ENCODE measurements at regions of chr15 and their contacts with region 1.

Region 1: DNA sequence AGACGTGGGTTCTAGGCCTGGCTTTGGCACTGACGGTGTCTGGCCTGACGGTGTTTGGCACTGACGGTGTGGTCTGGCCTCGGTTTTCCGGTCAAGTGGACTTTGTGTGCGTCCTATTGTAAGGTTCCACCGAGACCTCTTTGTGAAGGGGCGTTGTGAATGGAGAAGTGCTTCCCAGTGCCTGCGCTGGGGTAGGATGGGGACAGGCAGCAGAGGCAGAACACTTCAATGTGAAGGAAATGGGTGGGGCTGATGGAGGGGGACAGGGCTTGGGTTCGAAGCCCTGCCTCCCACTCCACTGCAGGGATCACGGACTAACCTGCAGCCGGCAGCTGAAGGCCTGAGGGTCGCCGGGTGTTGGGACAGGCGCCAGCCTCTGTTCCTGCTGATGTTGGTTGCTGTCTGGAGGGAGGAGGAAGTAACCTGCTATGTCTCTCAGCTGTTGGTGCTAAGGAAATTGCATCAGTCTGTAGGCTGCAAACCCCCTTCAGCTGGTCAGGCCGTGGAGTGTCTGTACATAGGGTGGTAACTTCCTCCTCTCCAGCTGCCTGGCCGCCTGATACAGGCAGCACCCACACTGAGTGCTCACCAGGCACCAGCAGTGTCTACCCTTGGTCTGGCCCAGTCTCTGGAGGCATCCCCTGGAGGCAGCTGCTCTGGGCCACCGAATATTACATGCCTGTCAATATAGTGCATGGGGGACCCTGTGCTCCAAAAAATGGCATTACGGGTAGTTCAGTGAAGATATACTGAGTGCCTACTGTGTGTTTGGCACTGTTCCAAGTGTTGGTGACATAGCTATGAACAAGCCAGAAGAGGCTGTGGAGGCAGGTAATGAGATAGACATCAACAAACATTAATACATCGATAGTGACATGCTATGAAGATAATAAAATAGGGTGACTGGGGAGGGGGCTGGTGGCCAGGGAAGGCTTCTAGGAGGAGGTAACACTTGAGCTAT is 1.1 kb downstream of the TM6SF1 start:
- DNase-seq: peak; percentile 27
- H3K4me3 Mint-ChIP-seq: peak overlapping the region; percentile 94
- H3K27ac Mint-ChIP-seq: peak overlapping the region; percentile 86
- H3K4me1 Mint-ChIP-seq: peaks cover 44% of the 10 kb centered on the region
- H3K27me3 Mint-ChIP-seq: peaks cover 11% of the 10 kb centered on the region

Region 2: DNA sequence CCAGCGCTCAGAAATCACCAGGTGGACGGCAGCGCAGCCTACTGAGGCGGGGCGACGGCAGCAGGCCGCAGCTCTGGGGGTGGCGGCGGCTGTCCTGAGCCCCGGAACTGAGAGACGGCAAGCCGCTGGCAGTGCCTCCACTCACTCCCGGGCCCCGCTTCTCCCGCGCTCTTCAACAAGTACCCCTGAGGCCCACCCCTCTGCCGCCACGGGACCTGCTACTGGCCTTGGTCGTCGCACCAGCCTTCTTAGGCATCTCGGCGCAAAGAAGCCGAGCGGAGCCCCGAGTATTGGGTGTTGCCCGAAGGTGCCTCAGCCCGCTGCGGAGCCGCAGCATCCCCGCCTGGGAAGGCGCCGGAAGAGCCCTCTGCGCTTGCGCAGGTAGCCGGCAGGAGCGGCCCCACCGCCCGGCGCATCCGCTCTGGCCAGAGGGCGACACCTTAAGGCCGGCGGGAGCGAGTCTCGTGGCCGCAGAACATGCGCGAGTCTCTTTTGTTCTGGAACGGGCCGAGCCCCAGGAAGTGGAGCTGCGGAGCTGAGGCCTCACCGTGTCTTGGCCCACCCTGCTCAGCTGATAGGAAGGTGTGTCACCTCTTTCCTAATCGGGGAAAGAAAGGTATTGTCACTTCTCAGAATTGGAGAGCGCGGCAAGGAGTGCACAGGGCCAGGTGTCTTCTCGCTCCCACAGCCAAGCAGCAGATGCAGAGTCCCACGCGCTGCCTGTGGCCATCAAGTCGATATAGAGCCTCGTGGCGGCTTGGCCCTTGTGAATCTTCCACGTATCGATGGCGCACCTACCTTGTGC is 97.1 kb before region 1 on chr15 and contains the start of gene C15orf40:
- intact Hi-C with region 1: loop called (anchors 1 kb)
- DNase-seq: peak; percentile 84
- H3K4me3 Mint-ChIP-seq: peak within 1 kb of the TSS; percentile 99
- H3K27ac Mint-ChIP-seq: peak within 1 kb of the TSS; percentile 98
- H3K4me1 Mint-ChIP-seq: peaks cover 50% of the 10 kb centered on the region
- H3K27me3 Mint-ChIP-seq: no peaks in the 10 kb centered on the region
- total RNA-seq, gene C15orf40: 24.2 and 29.0 TPM in 2 replicates

Region 3: GRCh38 chr15:83164111-83164770 is 55.7 kb after region 1 on chr15:
- intact Hi-C with region 1: loop called (anchors 2 kb)
- DNase-seq: no peak
- H3K4me3 Mint-ChIP-seq: peak overlapping the region; percentile 66
- H3K27ac Mint-ChIP-seq: peak overlapping the region; percentile 87
- H3K4me1 Mint-ChIP-seq: peaks cover 63% of the 10 kb centered on the region
- H3K27me3 Mint-ChIP-seq: peaks cover 1% of the 10 kb centered on the region

Measured in activated T-helper 1 cell treated with anti-CD3 and anti-CD28 coated beads, Interleukin-12 subunit alpha, Interleukin-12 subunit beta, Interleukin-2, Interleukin-4 antibody, amounts not matched to agents 30 ng/mL and 10 ng/mL and 1 ng/mL, durations not matched to agents 14 hours and 24 hours and 36 hours (primary cell).